WTC11 (cell line): ENCODE measurements at regions of chr19 and their contacts with region 1.

Region 1: GRCh38 chr19:40365613-40366401 is 17.3 kb downstream of the PLD3 start:
- DNase-seq: peak; percentile 89
- ATAC-seq: peak; percentile 82
- H3K4me3 Mint-ChIP-seq: peak overlapping the region; percentile 65
- H3K27ac Mint-ChIP-seq: no peak overlapping the region
- H3K4me1 Mint-ChIP-seq: peaks cover 12% of the 10 kb centered on the region
- H3K27me3 Mint-ChIP-seq: peaks cover 5% of the 10 kb centered on the region; the same call in 1 of the 2 replicates
- CTCF ChIP-seq: no peak

Region 2: GRCh38 chr19:40348125-40348913 is 17.5 kb before region 1 on chr19 and contains the starts of genes C19orf47 and PLD3:
- CTCF ChIA-PET with region 1: interaction called, 12 read pairs
- POLR2A ChIA-PET with region 1: interaction called, 3 read pairs
- DNase-seq: peak; percentile 99
- ATAC-seq: peak; percentile 97
- H3K4me3 Mint-ChIP-seq: peak within 1 kb of the TSS; percentile 90
- H3K27ac Mint-ChIP-seq: peak within 1 kb of the TSS; percentile 94
- H3K4me1 Mint-ChIP-seq: peaks cover 11% of the 10 kb centered on the region
- H3K27me3 Mint-ChIP-seq: no peaks in the 10 kb centered on the region
- CTCF ChIP-seq: no peak
- total RNA-seq, gene C19orf47: 14.7 to 17.2 TPM (median 15.6 TPM) in 3 replicates
- total RNA-seq, gene PLD3: 190 to 200 TPM (median 193 TPM) in 3 replicates

Region 3: DNA sequence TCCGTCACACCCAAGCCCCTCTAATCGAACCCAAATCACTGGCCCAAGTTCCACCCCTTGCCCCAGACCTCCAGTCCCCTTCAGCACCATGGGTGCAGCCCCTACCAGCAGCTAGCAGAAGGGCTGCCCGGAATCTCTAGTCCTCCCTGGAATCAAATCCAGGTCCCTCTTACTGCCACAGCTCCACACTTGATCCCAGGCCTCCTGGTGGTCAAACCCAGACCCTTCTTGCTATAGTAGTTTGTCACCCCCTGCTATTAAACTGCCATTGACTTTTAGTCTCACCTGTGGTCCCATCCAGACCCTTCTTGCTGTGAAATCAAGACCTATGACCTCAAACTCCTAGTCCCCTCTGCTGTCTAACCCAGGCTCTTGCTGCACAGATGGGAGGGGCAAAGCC is 15.5 kb after region 1 on chr19:
- CTCF ChIA-PET with region 1: interaction called, 28 read pairs
- POLR2A ChIA-PET with region 1: interaction called, 3 read pairs
- DNase-seq: no peak
- ATAC-seq: peak; percentile 71
- H3K4me3 Mint-ChIP-seq: no peak overlapping the region
- H3K27ac Mint-ChIP-seq: peak overlapping the region; percentile 45; the same call in 1 of the 2 replicates
- H3K4me1 Mint-ChIP-seq: 0 out of 2 replicates have a peak, but pooled peaks cover 4% of the 10 kb centered on the region
- H3K27me3 Mint-ChIP-seq: no peaks in the 10 kb centered on the region
- CTCF ChIP-seq: no peak